HCT116 (cell line): ENCODE measurements at regions of chr21 and their contacts with region 1.

Region 1: GRCh38 chr21:45554477-45555175 is 12.4 kb upstream of the SLC19A1 start:
- DNase-seq: peak; percentile 33
- ATAC-seq: peak; percentile 68
- H3K4me3 ChIP-seq: peak overlapping the region; percentile 54 to 67
- H3K27ac ChIP-seq: peak overlapping the region; percentile 68
- H3K4me1 ChIP-seq: peaks cover 14 to 38% of the 10 kb centered on the region in 2 experiments
- H3K27me3 ChIP-seq: no peaks in the 10 kb centered on the region
- CTCF ChIP-seq: peak in 2 of 3 experiments; percentile 59 to 76; a peak in 4 of 6 replicates
- POLR2A ChIP-seq: no peak
- RAD21 ChIP-seq: no peak

Region 2: DNA sequence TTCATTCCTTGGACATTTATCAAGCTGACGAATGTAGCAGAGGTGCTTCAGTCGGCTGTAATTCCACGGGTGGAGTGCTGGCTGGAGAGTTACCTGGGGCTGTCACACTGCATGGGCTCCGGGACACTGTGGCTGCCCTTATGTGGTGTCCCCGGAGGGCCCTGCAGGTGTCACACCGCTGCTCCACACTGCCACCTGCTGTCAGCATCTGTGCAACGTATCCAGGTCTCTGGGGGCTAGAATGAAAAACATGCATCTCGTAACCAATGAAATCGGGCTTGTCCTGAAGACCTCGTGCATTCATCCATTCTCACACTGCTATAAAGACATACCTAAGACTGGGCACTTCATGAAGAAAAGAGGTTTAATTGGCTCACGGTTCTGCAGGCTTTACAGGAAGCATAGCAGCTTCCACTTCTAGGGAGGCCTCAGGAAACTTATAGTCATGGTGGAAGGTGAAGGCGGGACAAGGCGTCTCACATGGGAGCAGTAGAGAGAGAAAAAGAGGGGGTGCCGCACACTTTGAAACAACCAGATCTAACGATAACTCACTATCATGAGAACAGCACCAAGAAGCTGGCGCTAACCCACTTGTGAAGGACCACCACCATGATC is 42.2 kb after region 1 on chr21:
- CTCF ChIA-PET with region 1: interaction called, 28 read pairs
- POLR2A ChIA-PET with region 1: interaction called, 5 read pairs
- RAD21 ChIA-PET with region 1: interaction called, 4 read pairs
- intact Hi-C with region 1: loop called (anchors 1 kb)
- DNase-seq: peak; percentile 48
- ATAC-seq: peak; percentile 98
- H3K4me3 ChIP-seq: no peak overlapping the region
- H3K27ac ChIP-seq: no peak overlapping the region
- H3K4me1 ChIP-seq: peaks cover 0 to 10% of the 10 kb centered on the region in 2 experiments; a peak in 2 of 4 replicates
- H3K27me3 ChIP-seq: no peaks in the 10 kb centered on the region
- CTCF ChIP-seq: peak; percentile 85 to 93 (median 89)
- POLR2A ChIP-seq: no peak
- RAD21 ChIP-seq: peak; percentile 68

Region 3: GRCh38 chr21:45643021-45643980 is 88.7 kb after region 1 on chr21 and contains the start of gene PCBP3:
- CTCF ChIA-PET with region 1: no interaction called
- POLR2A ChIA-PET with region 1: no interaction called
- RAD21 ChIA-PET with region 1: no interaction called
- intact Hi-C with region 1: loop called (anchors 5 kb)
- DNase-seq: peak; percentile 61
- ATAC-seq: peak; percentile 86
- H3K4me3 ChIP-seq: peak within 1 kb of the TSS; percentile 32; a peak in 3 of 4 replicates
- H3K27ac ChIP-seq: no peak within 1 kb of the TSS
- H3K4me1 ChIP-seq: no peaks in the 10 kb centered on the region
- H3K27me3 ChIP-seq: peaks cover 5% of the 10 kb centered on the region; the same call in 1 of the 2 replicates
- CTCF ChIP-seq: no peak
- POLR2A ChIP-seq: no peak
- RAD21 ChIP-seq: no peak
- total RNA-seq, gene PCBP3: 3.1 TPM

Region 4: GRCh38 chr21:45820171-45821091 is 265.8 kb after region 1 on chr21:
- CTCF ChIA-PET with region 1: interaction called, 39 read pairs
- POLR2A ChIA-PET with region 1: interaction called, 3 read pairs
- RAD21 ChIA-PET with region 1: interaction called in 1 of 2 experiments, 3 read pairs
- intact Hi-C with region 1: loop called (anchors 1 kb)
- DNase-seq: peak; percentile 75
- ATAC-seq: peak; percentile 92
- H3K4me3 ChIP-seq: no peak overlapping the region
- H3K27ac ChIP-seq: no peak overlapping the region; the same call in 1 of the 2 replicates
- H3K4me1 ChIP-seq: peaks cover 6 to 18% of the 10 kb centered on the region in 2 experiments; a peak in 3 of 4 replicates
- H3K27me3 ChIP-seq: no peaks in the 10 kb centered on the region; the same call in 1 of the 2 replicates
- CTCF ChIP-seq: peak; percentile 82 to 85 (median 84)
- POLR2A ChIP-seq: no peak
- RAD21 ChIP-seq: peak; percentile 90

Region 5: GRCh38 chr21:45880097-45881068 is 325.8 kb after region 1 on chr21:
- CTCF ChIA-PET with region 1: interaction called, 24 read pairs
- POLR2A ChIA-PET with region 1: no interaction called
- RAD21 ChIA-PET with region 1: interaction called in 1 of 2 experiments, 6 read pairs
- intact Hi-C with region 1: loop called (anchors 5 kb)
- DNase-seq: peak; percentile 69
- ATAC-seq: peak; percentile 99
- H3K4me3 ChIP-seq: no peak overlapping the region
- H3K27ac ChIP-seq: no peak overlapping the region
- H3K4me1 ChIP-seq: peaks cover 0 to 8% of the 10 kb centered on the region in 2 experiments; a peak in 2 of 4 replicates
- H3K27me3 ChIP-seq: no peaks in the 10 kb centered on the region
- CTCF ChIP-seq: peak; percentile 52 to 89 (median 88); a peak in 5 of 6 replicates
- POLR2A ChIP-seq: no peak
- RAD21 ChIP-seq: peak; percentile 50

Region 6: GRCh38 chr21:45923146-45923545 is 368.5 kb after region 1 on chr21:
- CTCF ChIA-PET with region 1: interaction called, 3 read pairs
- POLR2A ChIA-PET with region 1: interaction called, 3 read pairs
- RAD21 ChIA-PET with region 1: no interaction called
- intact Hi-C with region 1: loop called (anchors 10 kb)
- DNase-seq: peak; percentile 16
- ATAC-seq: peak; percentile 95
- H3K4me3 ChIP-seq: no peak overlapping the region
- H3K27ac ChIP-seq: no peak overlapping the region
- H3K4me1 ChIP-seq: peaks cover 2 to 8% of the 10 kb centered on the region in 2 experiments; a peak in 3 of 4 replicates
- H3K27me3 ChIP-seq: no peaks in the 10 kb centered on the region
- CTCF ChIP-seq: peak; percentile 43 to 84 (median 81); a peak in 5 of 6 replicates
- POLR2A ChIP-seq: no peak
- RAD21 ChIP-seq: peak; percentile 65

Region 7: GRCh38 chr21:46082900-46083790 is 528.5 kb after region 1 on chr21:
- CTCF ChIA-PET with region 1: no interaction called
- POLR2A ChIA-PET with region 1: no interaction called
- RAD21 ChIA-PET with region 1: no interaction called
- intact Hi-C with region 1: no loop called
- DNase-seq: no peak
- ATAC-seq: no peak
- H3K4me3 ChIP-seq: no peak overlapping the region
- H3K27ac ChIP-seq: no peak overlapping the region
- H3K4me1 ChIP-seq: peaks cover 0 to 5% of the 10 kb centered on the region in 2 experiments; a peak in 1 of 4 replicates
- H3K27me3 ChIP-seq: no peaks in the 10 kb centered on the region
- CTCF ChIP-seq: no peak
- POLR2A ChIP-seq: no peak
- RAD21 ChIP-seq: no peak